Vagina (tissue), 2 donors: ENCODE measurements at regions of chr5 and their contacts with region 1.

Region 1: GRCh38 chr5:34609951-34610441 is 46.1 kb upstream of the RAI14 start:
- DNase-seq: no peak
- H3K4me3 ChIP-seq: no peak overlapping the region
- H3K27ac ChIP-seq: peak overlapping the region; percentile 61
- H3K4me1 ChIP-seq: peaks cover 31% of the 10 kb centered on the region
- H3K27me3 ChIP-seq: no peaks in the 10 kb centered on the region
- CTCF ChIP-seq: no peak
- POLR2A ChIP-seq: no peak

Region 2: DNA sequence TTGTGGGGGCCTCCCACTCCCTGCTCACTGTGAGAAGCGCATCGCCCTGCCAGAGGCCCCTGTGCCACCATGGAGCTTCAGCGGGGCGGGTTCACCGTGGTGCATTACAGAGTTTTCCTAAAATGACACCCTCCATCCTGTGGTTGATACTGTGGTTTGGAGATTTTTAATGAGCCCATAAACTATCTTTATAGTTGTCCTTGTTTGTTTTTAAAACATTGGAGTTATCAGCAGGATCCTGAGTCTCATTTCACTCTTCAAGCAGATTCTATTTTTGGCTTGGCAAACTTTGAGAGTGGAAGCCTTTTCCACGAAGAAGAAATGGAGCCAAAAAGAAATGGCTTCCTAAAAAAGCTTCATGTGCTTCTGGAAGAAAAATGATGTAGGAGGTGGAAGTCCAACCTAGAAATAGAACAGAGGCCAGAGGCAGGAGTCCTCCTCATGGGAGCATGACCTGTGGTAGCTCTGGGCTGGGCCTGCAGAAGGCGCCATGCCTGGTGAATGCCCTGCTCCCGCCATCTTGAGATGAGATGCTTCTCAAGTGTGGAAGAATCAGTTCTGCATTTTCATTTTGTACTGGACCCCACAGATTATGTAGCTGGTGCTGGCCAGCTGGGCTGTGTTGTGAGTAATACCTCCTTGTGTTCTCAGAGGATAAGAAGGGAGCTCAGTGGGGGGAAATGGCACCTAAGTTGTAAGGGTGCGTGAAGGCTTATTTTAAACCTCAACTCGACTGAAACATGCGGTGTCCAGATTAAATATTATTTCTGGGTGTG is 32.9 kb before region 1 on chr5:
- intact Hi-C with region 1: loop called (anchors 2 kb)
- DNase-seq: no peak
- H3K4me3 ChIP-seq: no peak overlapping the region
- H3K27ac ChIP-seq: peak overlapping the region; percentile 57
- H3K4me1 ChIP-seq: no peaks in the 10 kb centered on the region
- H3K27me3 ChIP-seq: no peaks in the 10 kb centered on the region
- CTCF ChIP-seq: no peak
- POLR2A ChIP-seq: no peak

Region 3: DNA sequence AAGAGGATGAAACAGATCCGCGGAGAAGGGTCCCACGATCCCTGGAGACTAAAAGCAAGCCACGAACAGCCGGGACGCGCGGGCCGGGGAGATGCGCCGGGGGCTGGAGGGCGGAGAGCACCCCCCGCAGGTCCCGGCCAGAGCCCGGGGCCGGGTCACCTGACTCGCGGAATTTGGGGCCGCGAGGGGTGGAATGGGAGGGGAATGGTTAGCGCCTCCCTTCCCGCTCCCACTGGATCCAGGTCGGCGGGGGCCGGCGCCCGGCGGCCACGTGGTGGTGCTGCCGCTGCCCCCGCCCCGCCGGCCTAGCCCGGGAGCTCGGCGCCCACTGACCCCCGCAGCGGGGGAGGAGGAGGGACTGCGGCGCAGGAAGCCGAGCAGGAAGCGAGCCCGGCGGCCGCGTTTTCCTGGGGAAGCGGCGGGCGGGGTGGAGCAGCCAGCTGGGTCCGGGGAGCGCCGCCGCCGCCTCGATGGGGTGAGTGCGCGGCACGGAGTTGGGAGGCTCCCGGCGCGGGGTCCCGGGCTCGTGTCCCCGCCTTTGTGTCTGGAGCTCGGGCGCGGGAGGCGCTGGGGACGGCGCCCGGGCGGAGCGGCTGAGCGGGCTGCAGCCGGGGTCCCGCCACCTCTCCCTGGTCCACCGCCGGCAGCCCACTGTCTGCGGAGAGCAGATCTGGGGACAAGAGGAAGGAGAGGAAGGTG is 46.2 kb after region 1 on chr5 and contains the start of gene RAI14:
- intact Hi-C with region 1: no loop called
- DNase-seq: peak in 1 of 2 donors; percentile 92
- H3K4me3 ChIP-seq: peak within 1 kb of the TSS; percentile 70 to 90
- H3K27ac ChIP-seq: peak within 1 kb of the TSS; percentile 96
- H3K4me1 ChIP-seq: peaks cover 22% of the 10 kb centered on the region
- H3K27me3 ChIP-seq: no peaks in the 10 kb centered on the region
- CTCF ChIP-seq: no peak
- POLR2A ChIP-seq: peak in 1 of 2 donors; percentile 55
- total RNA-seq, gene RAI14: 30.7 TPM